ENCODE measurements at regions of chr1 and their contacts with region 1.

Region 1: DNA sequence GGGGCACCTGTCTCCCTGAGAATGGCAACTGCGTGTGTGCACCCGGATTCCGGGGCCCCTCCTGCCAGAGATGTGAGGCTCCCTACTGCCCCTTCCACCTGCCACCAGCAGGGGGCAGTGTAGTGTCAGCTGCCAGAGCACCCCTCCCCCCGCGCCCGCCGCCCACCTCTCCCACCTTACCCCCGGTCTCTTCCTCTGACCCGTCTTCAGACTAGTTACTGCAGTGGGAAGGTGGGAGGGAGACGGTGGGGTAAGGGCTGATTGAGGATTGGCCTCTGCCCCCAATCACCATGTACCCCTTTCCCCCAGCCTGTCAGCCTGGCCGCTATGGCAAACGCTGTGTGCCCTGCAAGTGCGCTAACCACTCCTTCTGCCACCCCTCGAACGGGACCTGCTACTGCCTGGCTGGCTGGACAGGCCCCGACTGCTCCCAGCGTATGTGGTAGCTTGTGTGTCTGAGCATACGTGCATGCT is 10.1 kb upstream of the LRRC71 start:
- DNase-seq: peak; percentile 36 to 52 (median 46)
- H3K4me3 ChIP-seq: no peak overlapping the region
- H3K4me3 Mint-ChIP-seq: no peak overlapping the region
- H3K27ac ChIP-seq: no peak overlapping the region
- H3K27ac Mint-ChIP-seq: peak overlapping the region in 1 of 7 donors; percentile 48
- H3K4me1 ChIP-seq: no peaks in the 10 kb centered on the region
- H3K4me1 Mint-ChIP-seq: peaks cover 0 to 2% (median under 1%) of the 10 kb centered on the region in 4 donors
- H3K27me3 ChIP-seq: peaks cover 4% of the 10 kb centered on the region
- H3K27me3 Mint-ChIP-seq: peaks cover 11 to 24% of the 10 kb centered on the region in 2 donors

Region 2: DNA sequence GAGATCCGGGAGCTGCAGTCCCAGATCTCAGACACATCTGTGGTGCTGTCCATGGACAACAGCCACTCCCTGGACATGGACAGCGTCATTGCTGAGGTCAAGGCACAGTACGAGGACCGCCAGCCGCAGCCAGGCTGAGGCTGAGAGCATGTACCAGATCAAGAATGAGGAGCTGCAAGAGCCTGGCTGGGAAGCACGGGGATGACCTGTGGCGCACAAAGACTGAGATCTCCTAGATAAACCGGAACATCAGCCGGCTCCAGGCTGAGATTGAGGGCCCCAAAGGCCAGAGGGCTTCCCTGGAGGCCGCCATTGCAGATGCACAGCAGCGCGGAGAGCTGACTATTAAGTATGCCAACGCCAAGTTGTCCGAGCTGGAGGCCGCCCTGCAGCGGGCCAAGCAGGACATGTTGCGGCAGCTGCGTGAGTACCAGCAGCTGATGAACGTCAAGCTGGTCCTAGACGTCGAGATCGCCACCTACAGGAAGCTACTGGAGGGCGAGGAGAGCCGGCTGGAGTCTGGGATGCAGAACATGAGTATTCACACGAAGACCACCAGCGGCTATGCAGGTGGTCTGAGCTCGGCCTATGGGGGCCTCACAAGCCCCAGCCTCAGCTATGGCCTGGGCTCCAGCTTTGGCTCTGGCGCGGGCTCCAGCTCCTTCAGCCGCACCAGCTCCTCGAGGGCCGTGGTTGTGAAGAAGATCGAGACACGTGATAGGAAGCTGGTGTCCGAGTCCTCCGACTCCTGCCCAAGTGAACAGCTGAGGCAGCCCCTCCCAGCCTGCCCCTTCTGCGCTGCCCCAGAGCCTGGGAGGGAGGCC is 163.8 kb after region 1 on chr1:
- CTCF ChIA-PET with region 1: interaction called, 11 read pairs
- POLR2A ChIA-PET with region 1: no interaction called
- intact Hi-C with region 1: no loop called
- DNase-seq: peak in 4 of 5 donors; percentile 4 to 21 (median 12)
- H3K4me3 ChIP-seq: no peak overlapping the region
- H3K4me3 Mint-ChIP-seq: peak overlapping the region in 1 of 8 donors; percentile 11
- H3K27ac ChIP-seq: no peak overlapping the region
- H3K27ac Mint-ChIP-seq: no peak overlapping the region
- H3K4me1 ChIP-seq: no peaks in the 10 kb centered on the region
- H3K4me1 Mint-ChIP-seq: peaks cover 0 to 9% (median 3%) of the 10 kb centered on the region in 4 donors
- H3K27me3 ChIP-seq: no peaks in the 10 kb centered on the region
- H3K27me3 Mint-ChIP-seq: peaks cover 19 to 29% of the 10 kb centered on the region in 2 donors

Measured in CD4-positive, alpha-beta memory T cell (primary cell).